ENCODE measurements at regions of chr2 and their contacts with region 1.

Region 1: DNA sequence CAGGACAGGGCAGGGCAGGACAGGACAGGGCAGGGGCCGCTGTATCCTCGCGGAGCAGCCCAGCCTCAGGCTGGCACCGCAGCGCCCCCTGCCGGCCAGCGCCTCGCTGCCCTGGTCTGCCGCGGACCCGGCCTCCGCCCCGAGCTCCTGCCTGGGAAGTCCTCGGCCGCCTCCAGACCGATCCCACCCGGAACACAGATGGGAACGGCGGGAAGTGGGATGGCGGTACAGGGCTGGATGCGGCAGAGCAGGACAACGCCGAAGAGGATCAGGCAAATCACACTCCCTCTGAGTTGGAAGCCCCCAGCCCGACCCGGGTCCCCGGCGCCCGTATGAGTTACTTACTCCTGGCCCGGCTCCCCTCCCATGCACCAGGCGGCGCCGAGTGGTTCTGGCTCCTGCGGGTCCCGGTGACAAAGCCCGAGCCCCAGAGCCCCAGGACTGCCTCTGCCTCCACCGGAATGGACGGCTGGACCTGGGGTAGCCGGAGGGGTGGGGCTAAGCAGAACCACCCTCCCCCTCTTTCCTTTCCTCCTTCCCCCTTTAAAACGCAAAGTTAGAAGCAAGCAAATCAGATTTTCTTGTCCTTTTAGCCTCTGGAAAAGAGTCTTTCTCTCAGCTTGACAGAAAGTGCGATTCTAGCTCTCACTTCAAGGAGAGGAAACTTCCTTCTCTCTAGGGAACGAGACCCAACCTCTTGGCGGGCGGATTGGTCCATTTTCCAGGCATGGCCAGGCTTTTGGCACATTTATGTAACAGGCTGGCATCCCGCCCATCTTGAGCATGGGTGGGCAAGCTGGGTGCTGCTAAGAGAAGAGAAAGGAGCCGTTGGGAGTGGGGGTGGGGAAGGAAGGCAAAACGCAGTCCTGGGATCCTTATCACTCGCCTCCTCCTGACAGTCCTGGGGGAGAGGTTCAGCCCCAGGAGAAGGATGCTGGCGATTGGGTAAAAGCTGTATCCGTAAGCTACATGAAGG is at the start of gene TP53I3:
- DNase-seq: peak; percentile 75 to 85 (median 78)
- H3K4me3 ChIP-seq: peak within 1 kb of the TSS; percentile 52 to 57
- H3K4me3 Mint-ChIP-seq: peak within 1 kb of the TSS; percentile 85 to 92 (median 88)
- H3K27ac ChIP-seq: peak within 1 kb of the TSS; percentile 27
- H3K27ac Mint-ChIP-seq: peak within 1 kb of the TSS in 6 of 7 donors; percentile 74 to 89 (median 82)
- H3K4me1 ChIP-seq: peaks cover 14% of the 10 kb centered on the region
- H3K4me1 Mint-ChIP-seq: peaks cover 11 to 14% (median 13%) of the 10 kb centered on the region in 4 donors
- H3K27me3 ChIP-seq: no peaks in the 10 kb centered on the region
- H3K27me3 Mint-ChIP-seq: no peaks in the 10 kb centered on the region
- total RNA-seq, gene TP53I3: 0.20 to 0.47 TPM

Region 2: GRCh38 chr2:23835988-23836387 is 248.7 kb before region 1 on chr2:
- CTCF ChIA-PET with region 1: no interaction called
- POLR2A ChIA-PET with region 1: no interaction called
- intact Hi-C with region 1: no loop called
- DNase-seq: no peak
- H3K4me3 ChIP-seq: no peak overlapping the region
- H3K4me3 Mint-ChIP-seq: no peak overlapping the region
- H3K27ac ChIP-seq: no peak overlapping the region
- H3K27ac Mint-ChIP-seq: no peak overlapping the region
- H3K4me1 ChIP-seq: no peaks in the 10 kb centered on the region
- H3K4me1 Mint-ChIP-seq: peaks cover 0 to 9% (median 7%) of the 10 kb centered on the region in 4 donors
- H3K27me3 ChIP-seq: no peaks in the 10 kb centered on the region
- H3K27me3 Mint-ChIP-seq: no peaks in the 10 kb centered on the region

Region 3: DNA sequence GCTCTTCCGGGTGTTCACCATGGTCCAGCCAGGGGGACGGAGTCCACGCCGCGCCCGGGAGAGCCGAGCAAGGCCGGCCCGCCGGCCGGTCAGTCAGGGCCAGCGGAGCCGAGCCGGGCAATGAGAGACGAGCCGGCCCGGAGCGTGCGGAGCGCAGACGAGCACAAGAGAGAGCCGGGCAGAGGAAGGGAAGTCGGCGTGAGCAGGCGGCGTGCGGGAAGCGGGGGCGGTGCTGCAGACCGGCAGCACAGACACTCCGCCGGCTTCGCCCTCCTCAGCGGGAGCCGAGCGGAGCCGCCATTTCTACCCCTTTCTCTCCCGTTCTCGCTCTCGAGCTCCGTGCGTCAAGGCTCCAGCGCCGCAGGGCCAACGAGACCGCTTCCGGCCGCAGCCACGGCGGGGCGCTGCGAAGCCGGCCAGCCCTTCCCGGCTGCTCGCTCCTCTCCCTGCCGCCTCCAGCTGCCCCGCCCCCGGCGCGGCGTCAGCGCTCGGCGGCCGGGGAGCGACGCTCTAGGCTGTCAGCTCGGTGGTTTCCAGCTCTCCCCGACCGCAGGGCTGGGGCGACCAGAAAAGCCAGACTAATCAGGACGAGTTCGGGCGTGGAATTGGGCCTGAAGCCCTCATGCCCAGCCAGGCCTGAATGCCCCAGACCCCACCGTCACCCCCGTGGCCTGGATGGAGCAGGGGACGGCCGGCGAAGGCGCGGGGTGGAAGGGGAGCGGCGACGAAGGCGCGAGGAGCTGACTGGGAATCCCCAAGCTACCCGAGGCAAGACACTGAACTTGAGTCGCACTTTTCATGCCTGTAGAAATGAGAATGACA is 157.7 kb before region 1 on chr2 and contains the start of gene ATAD2B:
- CTCF ChIA-PET with region 1: interaction called, 64 read pairs
- POLR2A ChIA-PET with region 1: interaction called, 24 read pairs
- intact Hi-C with region 1: loop called (anchors 2 kb)
- DNase-seq: peak; percentile 93 to 97 (median 96)
- H3K4me3 ChIP-seq: peak within 1 kb of the TSS; percentile 79 to 95
- H3K4me3 Mint-ChIP-seq: peak within 1 kb of the TSS; percentile 93 to 99 (median 98)
- H3K27ac ChIP-seq: peak within 1 kb of the TSS; percentile 97
- H3K27ac Mint-ChIP-seq: peak within 1 kb of the TSS; percentile 98 to 100 (median 100)
- H3K4me1 ChIP-seq: peaks cover 47% of the 10 kb centered on the region
- H3K4me1 Mint-ChIP-seq: peaks cover 35 to 63% (median 44%) of the 10 kb centered on the region in 4 donors
- H3K27me3 ChIP-seq: no peaks in the 10 kb centered on the region
- H3K27me3 Mint-ChIP-seq: no peaks in the 10 kb centered on the region
- total RNA-seq, gene ATAD2B: 38.7 to 44.4 TPM

Region 4: DNA sequence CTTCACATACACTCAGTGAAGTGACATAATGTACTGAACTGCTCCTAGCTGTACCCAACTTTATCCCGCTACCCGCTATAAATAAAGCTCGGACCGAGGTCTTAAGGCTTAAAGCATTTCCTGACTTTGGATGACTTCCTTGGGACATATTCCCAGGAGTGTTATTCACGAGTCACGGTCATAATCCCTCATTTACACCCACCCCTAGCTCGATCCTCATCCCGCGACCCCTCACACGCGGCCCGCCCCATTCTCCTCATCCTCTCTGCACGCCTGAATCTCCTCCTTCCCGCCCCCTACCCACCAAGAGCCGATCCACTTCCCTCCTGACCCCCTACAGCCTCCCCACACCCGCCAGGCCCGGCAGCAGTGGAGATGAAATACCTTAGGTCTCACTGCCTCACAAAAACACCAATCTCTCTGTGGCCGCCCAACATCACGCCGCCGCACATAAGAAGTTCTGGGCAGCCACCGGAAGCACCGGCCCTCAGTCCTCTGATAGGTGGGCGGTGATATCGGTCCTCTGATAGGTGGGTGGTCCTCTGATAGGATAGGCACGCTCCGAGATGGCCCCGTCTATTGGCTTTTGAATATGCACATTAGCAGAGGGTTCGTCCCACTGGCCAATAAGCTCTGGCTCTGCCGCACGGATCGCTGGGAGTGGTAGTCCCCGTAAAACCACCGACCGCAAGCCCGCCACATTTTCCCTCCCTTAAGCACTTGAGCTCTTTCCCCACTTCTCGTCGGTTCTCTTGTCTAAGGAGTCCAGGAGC is 37.6 kb before region 1 on chr2 and contains the start of gene WDCP:
- CTCF ChIA-PET with region 1: interaction called, 15 read pairs
- POLR2A ChIA-PET with region 1: interaction called, 7 read pairs
- intact Hi-C with region 1: loop called (anchors 2 kb)
- DNase-seq: peak; percentile 90 to 98 (median 92)
- H3K4me3 ChIP-seq: peak within 1 kb of the TSS; percentile 89 to 90
- H3K4me3 Mint-ChIP-seq: peak within 1 kb of the TSS; percentile 91 to 100 (median 96)
- H3K27ac ChIP-seq: peak within 1 kb of the TSS; percentile 65
- H3K27ac Mint-ChIP-seq: peak within 1 kb of the TSS; percentile 69 to 98 (median 93)
- H3K4me1 ChIP-seq: peaks cover 25% of the 10 kb centered on the region
- H3K4me1 Mint-ChIP-seq: peaks cover 16 to 28% (median 25%) of the 10 kb centered on the region in 4 donors
- H3K27me3 ChIP-seq: no peaks in the 10 kb centered on the region
- H3K27me3 Mint-ChIP-seq: peaks cover 0 to 1% of the 10 kb centered on the region in 2 donors
- total RNA-seq, gene WDCP: 17.5 to 20.5 TPM

Region 5: DNA sequence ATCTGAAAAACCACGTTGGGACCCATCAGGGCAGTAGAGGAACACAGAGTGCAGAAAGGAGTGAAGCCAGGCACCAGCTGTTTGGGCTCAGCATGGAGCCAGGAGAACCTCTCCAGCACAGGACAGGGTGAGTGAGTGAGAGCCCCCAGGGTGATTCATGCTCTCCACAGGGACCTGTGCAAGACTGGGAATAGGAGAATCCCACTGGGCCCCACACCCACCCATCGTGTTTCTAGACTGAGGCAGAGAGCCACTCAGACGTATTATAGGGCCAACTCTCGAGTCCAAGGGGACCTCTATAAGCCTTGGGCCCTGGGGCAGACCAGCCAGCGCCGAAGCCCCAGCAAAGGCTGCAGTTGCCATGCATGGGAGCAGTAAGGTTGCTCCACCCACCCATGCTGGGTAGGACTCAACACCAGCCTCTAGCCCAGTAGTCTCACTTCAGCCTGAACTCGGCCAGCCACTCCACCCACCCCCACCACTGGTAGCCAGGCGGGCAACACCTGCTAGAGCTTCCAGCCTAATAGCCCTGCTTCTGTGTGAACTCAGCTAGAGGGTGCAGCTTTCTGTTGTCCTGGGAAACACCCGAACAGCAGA is 19.5 kb after region 1 on chr2:
- CTCF ChIA-PET with region 1: interaction called, 10 read pairs
- POLR2A ChIA-PET with region 1: no interaction called
- intact Hi-C with region 1: no loop called
- DNase-seq: no peak
- H3K4me3 ChIP-seq: no peak overlapping the region
- H3K4me3 Mint-ChIP-seq: no peak overlapping the region
- H3K27ac ChIP-seq: no peak overlapping the region
- H3K27ac Mint-ChIP-seq: no peak overlapping the region
- H3K4me1 ChIP-seq: no peaks in the 10 kb centered on the region
- H3K4me1 Mint-ChIP-seq: no peaks in the 10 kb centered on the region
- H3K27me3 ChIP-seq: no peaks in the 10 kb centered on the region
- H3K27me3 Mint-ChIP-seq: no peaks in the 10 kb centered on the region

Region 6: GRCh38 chr2:24739354-24740025 is 654.8 kb after region 1 on chr2:
- CTCF ChIA-PET with region 1: no interaction called
- POLR2A ChIA-PET with region 1: no interaction called
- intact Hi-C with region 1: no loop called
- DNase-seq: no peak
- H3K4me3 ChIP-seq: no peak overlapping the region
- H3K4me3 Mint-ChIP-seq: no peak overlapping the region
- H3K27ac ChIP-seq: no peak overlapping the region
- H3K27ac Mint-ChIP-seq: peak overlapping the region in 2 of 7 donors; percentile 17 to 23
- H3K4me1 ChIP-seq: peaks cover 4% of the 10 kb centered on the region
- H3K4me1 Mint-ChIP-seq: peaks cover 6 to 10% (median 7%) of the 10 kb centered on the region in 4 donors
- H3K27me3 ChIP-seq: no peaks in the 10 kb centered on the region
- H3K27me3 Mint-ChIP-seq: no peaks in the 10 kb centered on the region